ENCODE measurements at regions of chr5 and their contacts with region 1.

Region 1: DNA sequence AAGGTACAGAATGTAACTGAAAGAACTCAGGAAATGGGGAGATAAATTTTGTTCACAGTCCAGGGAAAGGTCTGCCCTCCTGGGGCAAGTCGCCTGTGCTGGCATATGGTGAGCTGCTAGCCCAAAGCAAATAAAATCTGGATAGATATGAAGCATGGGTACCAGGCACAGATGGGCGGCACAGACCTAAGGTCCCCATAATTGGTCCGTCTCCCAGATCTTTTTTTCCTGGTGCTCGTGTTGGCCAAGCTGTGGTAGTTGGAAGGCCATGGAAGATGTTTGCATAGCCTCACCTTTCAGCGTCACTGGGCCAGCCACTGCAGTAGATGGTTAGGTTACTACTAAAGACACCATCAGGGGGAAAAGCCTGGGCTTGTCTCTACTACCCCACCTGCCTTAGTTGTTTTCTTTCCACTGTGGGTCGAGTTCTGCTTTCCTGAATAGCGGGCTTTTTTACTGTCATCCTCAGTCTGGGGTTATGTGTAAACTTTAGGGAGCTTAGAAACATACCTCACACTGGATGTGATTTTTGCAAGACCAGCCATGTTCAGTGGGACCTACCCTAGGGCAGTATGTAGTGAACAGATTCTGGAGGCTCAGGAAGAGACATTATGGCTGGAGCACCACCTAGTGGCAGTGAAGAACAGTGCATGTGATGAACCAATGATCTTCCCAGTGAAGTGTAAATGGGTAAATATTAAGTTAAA is 24.2 kb upstream of the GLRX start:
- DNase-seq: peak; percentile 71 to 85 (median 77)
- H3K4me3 ChIP-seq: no peak overlapping the region
- H3K27ac ChIP-seq: no peak overlapping the region
- H3K4me1 ChIP-seq: peaks cover 13 to 31% (median 26%) of the 10 kb centered on the region in 4 experiments
- H3K27me3 ChIP-seq: no peaks in the 10 kb centered on the region

Region 2: GRCh38 chr5:95641741-95642220 is 204.9 kb before region 1 on chr5:
- CTCF ChIA-PET with region 1: interaction called, 27 read pairs
- POLR2A ChIA-PET with region 1: no interaction called
- DNase-seq: no peak
- H3K4me3 ChIP-seq: no peak overlapping the region
- H3K27ac ChIP-seq: no peak overlapping the region
- H3K4me1 ChIP-seq: peaks cover 0 to 8% (median 2%) of the 10 kb centered on the region in 4 experiments
- H3K27me3 ChIP-seq: no peaks in the 10 kb centered on the region

Region 3: GRCh38 chr5:95646554-95647431 is 199.9 kb before region 1 on chr5 and contains the start of gene RFESD:
- CTCF ChIA-PET with region 1: interaction called, 27 read pairs
- POLR2A ChIA-PET with region 1: no interaction called
- DNase-seq: peak; percentile 97 to 99 (median 99)
- H3K4me3 ChIP-seq: peak within 1 kb of the TSS; percentile 13 to 76 (median 63)
- H3K27ac ChIP-seq: peak within 1 kb of the TSS; percentile 60 to 83
- H3K4me1 ChIP-seq: peaks cover 12 to 31% (median 20%) of the 10 kb centered on the region in 4 experiments
- H3K27me3 ChIP-seq: no peaks in the 10 kb centered on the region

Region 4: GRCh38 chr5:95664204-95664786 is 182.4 kb before region 1 on chr5:
- CTCF ChIA-PET with region 1: interaction called, 24 read pairs
- POLR2A ChIA-PET with region 1: no interaction called
- DNase-seq: peak; percentile 38 to 68 (median 52)
- H3K4me3 ChIP-seq: no peak overlapping the region
- H3K27ac ChIP-seq: no peak overlapping the region
- H3K4me1 ChIP-seq: peaks cover 0 to 25% (median 14%) of the 10 kb centered on the region in 4 experiments
- H3K27me3 ChIP-seq: no peaks in the 10 kb centered on the region

Region 5: DNA sequence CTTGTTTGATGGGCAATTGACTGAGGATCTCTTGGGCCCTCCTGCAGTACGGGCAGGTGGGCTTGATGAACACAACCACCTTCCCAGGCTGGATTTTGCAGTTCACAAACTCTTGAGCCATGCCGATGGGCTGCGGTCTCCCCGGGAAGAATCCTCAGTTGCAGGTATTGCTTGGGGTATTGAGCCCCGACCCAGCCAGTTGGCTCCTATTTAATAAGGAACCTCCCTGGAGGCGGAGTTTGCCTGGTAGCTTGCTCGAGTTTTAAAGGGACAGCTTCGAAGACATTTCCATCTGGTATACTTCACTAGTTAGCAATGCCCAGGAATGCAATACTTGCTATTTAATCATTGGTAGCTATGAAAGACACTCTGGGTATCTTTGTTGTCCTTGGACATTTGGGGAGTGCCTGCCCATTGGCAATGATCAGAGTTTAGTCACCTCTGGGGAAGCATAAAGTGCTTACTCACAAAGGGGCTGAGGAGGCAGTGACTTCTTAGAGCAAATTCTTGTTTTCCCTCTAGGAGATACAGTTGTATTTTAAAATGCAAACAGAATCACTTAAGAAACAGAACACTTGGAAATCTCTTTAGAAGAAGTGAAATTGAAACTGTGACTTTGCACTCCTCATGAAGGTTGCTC is 24.0 kb before region 1 on chr5 and contains the start of gene GLRX:
- CTCF ChIA-PET with region 1: interaction called, 60 read pairs
- POLR2A ChIA-PET with region 1: interaction called, 4 read pairs
- DNase-seq: peak in 2 of 3 donors; percentile 67 to 77
- H3K4me3 ChIP-seq: peak within 1 kb of the TSS; percentile 58 to 97 (median 91)
- H3K27ac ChIP-seq: peak within 1 kb of the TSS; percentile 70 to 86
- H3K4me1 ChIP-seq: peaks cover 28 to 83% (median 60%) of the 10 kb centered on the region in 4 experiments
- H3K27me3 ChIP-seq: no peaks in the 10 kb centered on the region

Region 6: GRCh38 chr5:95835682-95836385 is 10.9 kb before region 1 on chr5:
- CTCF ChIA-PET with region 1: interaction called, 15 read pairs
- POLR2A ChIA-PET with region 1: no interaction called
- DNase-seq: peak in 2 of 3 donors; percentile 80 to 85
- H3K4me3 ChIP-seq: peak overlapping the region in 6 of 7 experiments; percentile 46 to 82 (median 72)
- H3K27ac ChIP-seq: peak overlapping the region; percentile 37 to 75
- H3K4me1 ChIP-seq: peaks cover 16 to 46% (median 32%) of the 10 kb centered on the region in 4 experiments
- H3K27me3 ChIP-seq: no peaks in the 10 kb centered on the region

Region 7: GRCh38 chr5:96037128-96037527 is 190.4 kb after region 1 on chr5:
- CTCF ChIA-PET with region 1: no interaction called
- POLR2A ChIA-PET with region 1: no interaction called
- DNase-seq: no peak
- H3K4me3 ChIP-seq: no peak overlapping the region
- H3K27ac ChIP-seq: no peak overlapping the region
- H3K4me1 ChIP-seq: no peaks in the 10 kb centered on the region
- H3K27me3 ChIP-seq: no peaks in the 10 kb centered on the region